ENCODE measurements at regions of chr19 and their contacts with region 1.

Region 1: DNA sequence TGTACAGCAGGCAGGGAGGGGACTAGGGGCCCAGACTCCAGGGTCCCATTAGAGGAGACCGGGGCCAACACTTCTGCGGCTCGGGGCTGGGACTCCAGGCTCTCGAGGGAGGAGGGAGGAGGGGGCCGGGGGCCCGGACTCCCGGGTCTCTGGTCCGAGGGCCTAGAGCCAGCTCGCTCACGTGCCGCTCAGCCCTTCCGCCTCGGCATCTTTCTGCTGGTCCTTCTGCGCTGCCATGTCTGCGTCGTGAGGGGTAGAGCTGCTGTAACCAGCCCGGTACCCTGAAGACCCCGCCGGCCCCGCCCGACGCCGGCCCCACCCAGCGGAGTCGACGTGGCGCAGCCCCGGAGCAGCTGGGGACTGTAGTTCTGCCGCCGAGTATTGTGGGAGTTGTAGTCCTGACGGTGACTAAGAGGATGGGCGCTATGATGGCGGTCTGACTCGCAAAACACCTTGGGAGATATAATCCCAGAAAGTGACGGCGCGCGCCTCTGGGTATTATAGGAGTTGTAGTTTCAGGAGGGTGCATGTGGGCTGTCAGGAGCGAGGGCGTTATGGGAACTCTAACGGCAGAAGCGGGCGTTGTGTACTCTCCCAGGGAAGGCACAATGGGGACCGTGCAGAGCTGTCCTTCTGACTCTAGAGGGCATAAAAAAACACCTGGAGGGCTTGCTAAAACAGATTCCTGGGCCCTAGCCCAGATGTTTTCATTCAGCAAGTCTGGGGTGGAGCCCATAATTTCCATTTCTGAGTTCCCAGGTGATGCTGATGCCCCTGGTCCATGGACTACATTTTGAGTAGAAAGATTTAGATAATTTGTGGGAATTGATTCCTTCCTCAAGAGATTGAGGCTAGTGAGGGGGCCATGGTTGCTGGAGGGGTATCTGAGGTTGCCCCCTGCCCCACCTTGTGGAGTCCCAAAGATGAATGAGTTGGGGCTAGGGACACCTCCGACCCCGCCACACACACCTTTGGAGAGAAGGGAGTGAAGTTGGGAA is at the start of gene RABAC1:
- DNase-seq: peak; percentile 97 to 100
- ATAC-seq: peak; percentile 78 to 90
- H3K4me3 ChIP-seq: peak within 1 kb of the TSS; percentile 76
- H3K27ac ChIP-seq: peak within 1 kb of the TSS; percentile 80 to 87
- H3K4me1 ChIP-seq: peaks cover 13% of the 10 kb centered on the region
- CTCF ChIP-seq: peak; percentile 54
- EP300 ChIP-seq: no peak
- POLR2A ChIP-seq: peak; percentile 70
- RAD21 ChIP-seq: peak in 1 of 2 experiments; percentile 35; a peak in 1 of 5 replicates
- polyA plus RNA-seq, gene RABAC1: 117 and 137 TPM in 2 replicates

Region 2: GRCh38 chr19:41795031-41795461 is 164.3 kb before region 1 on chr19:
- CTCF ChIA-PET with region 1: interaction called, 14 read pairs
- POLR2A ChIA-PET with region 1: no interaction called
- DNase-seq: peak; percentile 49 to 70
- ATAC-seq: peak; percentile 61 to 89
- H3K4me3 ChIP-seq: no peak overlapping the region
- H3K27ac ChIP-seq: no peak overlapping the region
- H3K4me1 ChIP-seq: 0 out of 3 replicates have a peak, but pooled peaks cover 11% of the 10 kb centered on the region
- CTCF ChIP-seq: peak; percentile 96
- EP300 ChIP-seq: no peak
- POLR2A ChIP-seq: no peak
- RAD21 ChIP-seq: peak; percentile 32 to 47; a peak in 4 of 5 replicates

Region 3: GRCh38 chr19:41872775-41873647 is 86.3 kb before region 1 on chr19:
- CTCF ChIA-PET with region 1: interaction called, 87 read pairs
- POLR2A ChIA-PET with region 1: interaction called, 24 read pairs
- DNase-seq: peak; percentile 90 to 94
- ATAC-seq: peak; percentile 63 to 79
- H3K4me3 ChIP-seq: no peak overlapping the region
- H3K27ac ChIP-seq: no peak overlapping the region
- H3K4me1 ChIP-seq: peaks cover 35% of the 10 kb centered on the region
- CTCF ChIP-seq: peak; percentile 94
- EP300 ChIP-seq: no peak
- POLR2A ChIP-seq: no peak
- RAD21 ChIP-seq: peak; percentile 87

Region 4: GRCh38 chr19:41910240-41910991 is 48.9 kb before region 1 on chr19:
- CTCF ChIA-PET with region 1: interaction called, 28 read pairs
- POLR2A ChIA-PET with region 1: no interaction called
- DNase-seq: no peak
- ATAC-seq: peak in 1 of 2 experiments; percentile 0; a peak in 2 of 6 replicates
- H3K4me3 ChIP-seq: no peak overlapping the region
- H3K27ac ChIP-seq: no peak overlapping the region
- H3K4me1 ChIP-seq: peaks cover 35% of the 10 kb centered on the region
- CTCF ChIP-seq: no peak
- EP300 ChIP-seq: no peak
- POLR2A ChIP-seq: no peak
- RAD21 ChIP-seq: no peak

Region 5: GRCh38 chr19:41934849-41935374 is 24.4 kb before region 1 on chr19:
- CTCF ChIA-PET with region 1: interaction called, 31 read pairs
- POLR2A ChIA-PET with region 1: no interaction called
- DNase-seq: peak; percentile 80 to 96
- ATAC-seq: peak; percentile 48 to 88
- H3K4me3 ChIP-seq: no peak overlapping the region
- H3K27ac ChIP-seq: no peak overlapping the region
- H3K4me1 ChIP-seq: 0 out of 3 replicates have a peak, but pooled peaks cover 3% of the 10 kb centered on the region
- CTCF ChIP-seq: peak; percentile 96
- EP300 ChIP-seq: no peak
- POLR2A ChIP-seq: no peak
- RAD21 ChIP-seq: peak; percentile 77 to 90

Region 6: GRCh38 chr19:42028304-42029216 is 69.2 kb after region 1 on chr19:
- CTCF ChIA-PET with region 1: interaction called, 27 read pairs
- POLR2A ChIA-PET with region 1: no interaction called
- DNase-seq: peak in 1 of 2 experiments; percentile 56
- ATAC-seq: peak; percentile 37 to 62; a peak in 5 of 6 replicates
- H3K4me3 ChIP-seq: no peak overlapping the region
- H3K27ac ChIP-seq: no peak overlapping the region
- H3K4me1 ChIP-seq: no peaks in the 10 kb centered on the region
- CTCF ChIP-seq: peak; percentile 48
- EP300 ChIP-seq: no peak
- POLR2A ChIP-seq: no peak
- RAD21 ChIP-seq: no peak

Region 7: DNA sequence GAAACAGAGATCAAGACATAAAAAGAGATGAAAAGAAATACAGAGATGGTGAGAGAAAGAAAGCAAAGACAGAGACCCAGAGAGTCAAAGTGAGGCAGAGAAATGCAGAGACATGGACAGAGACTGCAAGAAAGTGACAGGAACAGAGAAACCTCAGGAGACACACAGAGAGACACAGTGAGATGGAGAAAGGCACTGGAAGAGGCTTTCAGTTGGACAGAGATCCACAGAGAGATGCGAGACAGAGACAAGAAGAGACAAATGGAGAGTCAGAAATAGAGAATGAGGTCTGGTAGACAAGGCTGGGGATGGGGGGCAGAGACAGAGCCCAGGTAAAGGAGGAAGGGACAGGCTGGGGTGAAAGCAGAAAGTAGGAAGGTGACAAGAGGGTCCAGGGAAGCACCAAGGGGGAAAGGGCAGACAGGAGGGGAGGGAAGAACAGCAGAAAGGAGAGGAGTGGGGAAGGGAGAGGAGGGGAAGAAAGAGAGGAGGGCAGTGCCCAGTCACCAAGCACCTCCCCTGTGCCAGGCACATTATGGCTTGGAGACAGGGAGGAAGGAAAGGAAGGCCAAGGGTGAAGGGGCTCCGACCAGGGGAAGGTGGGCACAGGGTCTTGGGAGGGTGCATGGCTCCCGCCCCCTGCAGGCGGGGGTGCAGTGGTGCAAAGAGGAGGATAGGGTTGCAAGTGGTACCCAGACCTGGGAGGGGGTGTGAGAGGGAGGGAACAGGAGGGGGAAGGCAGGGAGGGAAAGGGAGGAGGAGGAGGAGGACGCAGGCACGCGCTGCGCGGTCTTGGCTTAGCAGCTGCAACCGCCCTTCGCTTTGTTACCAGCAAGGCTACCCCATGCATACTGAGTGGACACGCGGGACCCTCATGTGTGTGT is 219.7 kb after region 1 on chr19:
- CTCF ChIA-PET with region 1: no interaction called
- POLR2A ChIA-PET with region 1: no interaction called
- DNase-seq: peak; percentile 51 to 87
- ATAC-seq: peak; percentile 11 to 42; a peak in 3 of 6 replicates
- H3K4me3 ChIP-seq: no peak overlapping the region
- H3K27ac ChIP-seq: no peak overlapping the region
- H3K4me1 ChIP-seq: peaks cover 12% of the 10 kb centered on the region
- CTCF ChIP-seq: peak; percentile 42
- EP300 ChIP-seq: no peak
- POLR2A ChIP-seq: no peak
- RAD21 ChIP-seq: no peak